Activated CD8-positive, alpha-beta T cell treated with anti-CD3 and anti-CD28 coated beads for 36 hours (primary cell): ENCODE measurements at regions of chr2 and their contacts with region 1.

Region 1: GRCh38 chr2:96174251-96175144 is 29.3 kb upstream of the DUSP2 start:
- DNase-seq: peak; percentile 92
- ATAC-seq: peak; percentile 99
- H3K4me3 Mint-ChIP-seq: peak overlapping the region; percentile 29
- H3K27ac Mint-ChIP-seq: peak overlapping the region; percentile 70
- H3K4me1 Mint-ChIP-seq: peaks cover 25% of the 10 kb centered on the region
- H3K27me3 Mint-ChIP-seq: no peaks in the 10 kb centered on the region
- CTCF ChIP-seq: peak; percentile 91

Region 2: DNA sequence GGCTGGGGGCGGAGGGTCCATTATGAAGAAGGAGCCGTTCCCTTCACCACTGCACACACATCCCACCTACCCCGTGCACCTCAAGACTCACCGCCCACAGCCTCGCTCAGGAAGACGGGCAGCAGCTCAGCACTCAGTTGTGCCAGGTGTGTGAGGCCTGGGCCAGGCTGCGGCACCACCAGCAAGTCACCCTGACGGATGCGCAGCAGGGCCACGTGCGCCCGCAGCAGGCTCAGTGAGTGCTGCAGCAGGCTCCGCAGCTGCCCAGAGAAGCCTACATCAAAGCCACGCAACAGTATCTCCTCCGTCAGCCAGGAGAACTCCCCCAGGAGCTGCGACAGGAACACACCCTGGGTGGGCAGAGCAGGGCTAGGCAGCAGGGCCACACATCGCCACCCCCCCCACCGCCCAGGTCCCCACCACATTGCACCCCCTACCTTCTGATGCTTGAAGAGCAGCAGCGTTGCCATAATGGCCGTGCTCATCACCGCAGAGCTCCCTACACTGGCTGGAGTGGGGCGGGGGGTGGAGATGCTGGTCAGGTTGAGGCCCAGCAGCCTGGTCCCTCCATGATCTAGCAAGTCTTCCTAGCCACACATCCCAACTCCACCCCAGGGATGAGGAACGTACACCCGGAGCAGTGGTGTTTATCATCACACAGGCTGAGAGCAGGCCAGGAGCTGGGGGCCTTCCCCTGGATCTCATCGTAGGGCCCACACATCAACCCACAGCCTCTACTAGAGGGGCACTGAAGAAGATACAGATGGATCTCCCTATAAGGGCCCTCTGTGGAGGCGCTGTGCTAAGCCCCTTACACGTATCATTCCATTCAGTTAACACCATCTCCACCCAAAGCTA is 149.9 kb before region 1 on chr2:
- CTCF ChIA-PET with region 1: interaction called, 23 read pairs
- POLR2A ChIA-PET with region 1: no interaction called
- intact Hi-C with region 1: no loop called
- DNase-seq: no peak
- ATAC-seq: no peak
- H3K4me3 Mint-ChIP-seq: no peak overlapping the region
- H3K27ac Mint-ChIP-seq: no peak overlapping the region
- H3K4me1 Mint-ChIP-seq: peaks cover 4% of the 10 kb centered on the region
- H3K27me3 Mint-ChIP-seq: no peaks in the 10 kb centered on the region
- CTCF ChIP-seq: no peak

Region 3: DNA sequence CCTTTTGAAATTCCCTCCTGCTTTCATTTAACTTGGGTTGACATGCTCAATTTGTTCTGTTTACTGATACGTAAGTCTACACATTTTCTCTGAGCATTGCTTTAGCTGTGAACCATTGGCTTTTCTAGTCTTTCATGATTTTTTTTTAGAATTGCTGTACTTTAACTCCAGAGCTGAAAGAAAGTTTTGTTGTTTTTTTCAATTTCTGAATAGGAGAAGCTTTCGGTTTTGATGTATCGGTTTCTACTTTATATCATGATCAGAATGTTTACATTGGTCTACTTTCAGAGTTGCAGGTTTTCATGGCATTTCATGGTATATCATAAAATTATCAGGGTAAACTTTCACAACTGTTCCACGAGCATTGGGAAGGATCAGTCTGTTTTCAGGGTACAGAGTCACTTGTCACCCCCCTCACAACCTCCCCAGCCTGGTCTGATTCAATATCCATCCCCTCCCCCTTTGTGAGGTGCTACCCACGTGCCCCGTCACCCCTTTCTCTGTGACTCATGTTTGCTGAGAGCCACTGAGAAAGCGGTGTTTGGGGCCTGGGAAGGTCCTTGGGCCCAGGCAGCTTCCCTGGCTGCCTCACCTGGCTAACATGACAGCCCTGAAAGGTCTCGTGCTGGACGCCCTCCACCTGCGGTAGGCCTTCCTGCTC is 43.2 kb before region 1 on chr2:
- CTCF ChIA-PET with region 1: interaction called, 540 read pairs
- POLR2A ChIA-PET with region 1: interaction called, 690 read pairs
- intact Hi-C with region 1: no loop called
- DNase-seq: peak; percentile 72
- ATAC-seq: peak; percentile 74
- H3K4me3 Mint-ChIP-seq: peak overlapping the region; percentile 28
- H3K27ac Mint-ChIP-seq: peak overlapping the region; percentile 90
- H3K4me1 Mint-ChIP-seq: peaks cover 23% of the 10 kb centered on the region
- H3K27me3 Mint-ChIP-seq: no peaks in the 10 kb centered on the region
- CTCF ChIP-seq: no peak

Region 4: DNA sequence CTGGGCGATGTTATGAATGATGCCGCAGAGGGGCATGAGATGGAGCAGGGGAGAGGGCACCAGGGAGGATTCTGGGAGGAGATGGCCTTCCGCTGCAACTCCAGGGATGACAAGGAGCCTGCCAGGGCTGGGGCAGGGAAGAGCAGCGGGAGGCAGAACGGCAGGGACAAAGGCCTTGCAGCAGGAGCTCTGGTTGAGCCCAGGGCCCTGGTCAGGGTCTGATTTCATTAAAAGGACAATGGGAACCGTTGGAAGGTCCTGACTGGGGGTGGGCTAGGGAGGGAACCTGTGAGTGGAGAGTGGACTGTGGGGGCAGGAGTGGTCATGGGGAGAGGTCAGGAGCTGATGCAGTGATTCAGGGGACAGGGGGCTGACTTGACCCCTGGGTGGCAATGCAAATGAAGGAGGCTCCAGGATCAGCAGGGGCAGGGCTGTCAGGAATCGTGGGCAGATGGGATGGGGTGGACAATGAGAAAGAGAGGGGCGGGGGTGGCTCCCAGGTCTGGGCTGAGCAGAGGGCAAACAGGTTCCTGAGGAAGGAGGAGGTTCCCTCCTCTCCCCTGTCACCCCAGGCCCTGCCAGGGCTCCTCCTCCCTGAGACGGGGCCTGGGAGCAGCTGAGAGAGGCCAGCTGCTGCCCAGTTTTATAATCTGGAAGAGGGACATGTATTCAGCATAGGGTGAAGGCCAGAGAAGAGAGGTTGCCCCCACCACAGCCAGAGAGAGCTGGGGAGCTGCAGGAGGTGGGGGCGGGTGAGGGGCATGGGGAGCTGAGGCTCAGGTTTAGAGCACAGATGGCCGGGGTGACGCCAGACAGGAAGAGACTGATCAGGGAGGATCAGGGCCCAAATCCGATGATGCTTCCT is 22.0 kb before region 1 on chr2:
- CTCF ChIA-PET with region 1: interaction called, 540 read pairs
- POLR2A ChIA-PET with region 1: interaction called, 690 read pairs
- intact Hi-C with region 1: no loop called
- DNase-seq: no peak
- ATAC-seq: no peak
- H3K4me3 Mint-ChIP-seq: no peak overlapping the region
- H3K27ac Mint-ChIP-seq: peak overlapping the region; percentile 48
- H3K4me1 Mint-ChIP-seq: peaks cover 94% of the 10 kb centered on the region
- H3K27me3 Mint-ChIP-seq: no peaks in the 10 kb centered on the region
- CTCF ChIP-seq: no peak

Region 5: GRCh38 chr2:96201338-96201737 is 26.8 kb after region 1 on chr2:
- CTCF ChIA-PET with region 1: interaction called, 16 read pairs
- POLR2A ChIA-PET with region 1: interaction called, 3 read pairs
- intact Hi-C with region 1: no loop called
- DNase-seq: no peak
- ATAC-seq: no peak
- H3K4me3 Mint-ChIP-seq: no peak overlapping the region
- H3K27ac Mint-ChIP-seq: no peak overlapping the region
- H3K4me1 Mint-ChIP-seq: peaks cover 75% of the 10 kb centered on the region
- H3K27me3 Mint-ChIP-seq: no peaks in the 10 kb centered on the region
- CTCF ChIP-seq: no peak

Region 6: DNA sequence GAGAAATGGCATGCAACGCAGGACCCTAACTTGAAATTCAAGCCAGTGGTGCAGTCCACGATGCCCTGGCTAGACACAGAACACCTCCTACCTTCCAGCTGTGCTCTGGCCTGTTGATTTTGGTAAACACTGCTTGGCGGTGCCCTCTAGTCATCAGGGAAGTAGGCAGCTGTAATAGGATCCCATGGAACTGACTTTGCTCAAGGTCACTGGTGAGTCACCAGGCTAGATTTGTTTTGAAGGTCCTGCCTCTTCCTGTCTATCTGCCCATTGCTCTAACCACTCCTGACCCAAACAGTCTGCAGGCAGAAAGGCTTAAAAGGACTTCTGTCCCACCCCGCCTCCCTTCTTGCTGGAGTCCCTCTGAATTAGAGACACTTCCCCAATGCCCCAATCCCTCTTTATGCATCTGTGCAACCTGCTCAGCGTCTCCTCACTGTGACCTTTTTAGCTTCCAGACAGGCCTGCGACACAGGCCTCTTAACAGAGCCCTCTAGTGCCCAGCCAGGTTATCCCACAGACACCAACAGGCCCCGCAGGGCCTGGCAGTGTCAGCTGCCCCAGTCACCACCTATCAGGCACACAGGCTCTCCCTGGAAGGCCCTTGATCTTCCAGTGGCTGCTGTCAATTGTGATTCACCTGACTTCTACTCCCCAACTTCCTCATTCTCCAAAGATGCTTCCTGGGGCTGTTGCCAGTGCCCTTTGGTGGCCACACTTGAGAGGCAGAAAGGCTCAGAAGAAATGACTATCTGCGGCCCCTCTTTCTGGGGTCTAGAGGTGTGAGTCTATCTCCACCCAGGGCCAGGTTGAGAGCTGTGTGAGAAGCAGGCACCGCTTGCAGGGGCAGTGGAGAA is 86.1 kb after region 1 on chr2:
- CTCF ChIA-PET with region 1: interaction called, 11 read pairs
- POLR2A ChIA-PET with region 1: no interaction called
- intact Hi-C with region 1: no loop called
- DNase-seq: peak; percentile 61
- ATAC-seq: peak; percentile 66
- H3K4me3 Mint-ChIP-seq: no peak overlapping the region
- H3K27ac Mint-ChIP-seq: peak overlapping the region; percentile 81
- H3K4me1 Mint-ChIP-seq: peaks cover 69% of the 10 kb centered on the region
- H3K27me3 Mint-ChIP-seq: no peaks in the 10 kb centered on the region
- CTCF ChIP-seq: no peak

Region 7: GRCh38 chr2:96276787-96277499 is 102.4 kb after region 1 on chr2:
- CTCF ChIA-PET with region 1: no interaction called
- POLR2A ChIA-PET with region 1: no interaction called
- intact Hi-C with region 1: no loop called
- DNase-seq: no peak
- ATAC-seq: no peak
- H3K4me3 Mint-ChIP-seq: no peak overlapping the region
- H3K27ac Mint-ChIP-seq: no peak overlapping the region
- H3K4me1 Mint-ChIP-seq: peaks cover 5% of the 10 kb centered on the region
- H3K27me3 Mint-ChIP-seq: no peaks in the 10 kb centered on the region
- CTCF ChIP-seq: no peak